ENCODE measurements at regions of chr12 and their contacts with region 1.

Region 1: GRCh38 chr12:87344699-87345098 is 684.5 kb downstream of the C12orf50 start:
- ATAC-seq: no peak
- H3K4me3 ChIP-seq: no peak overlapping the region
- H3K27ac ChIP-seq: no peak overlapping the region
- H3K4me1 ChIP-seq: no peaks in the 10 kb centered on the region

Region 2: DNA sequence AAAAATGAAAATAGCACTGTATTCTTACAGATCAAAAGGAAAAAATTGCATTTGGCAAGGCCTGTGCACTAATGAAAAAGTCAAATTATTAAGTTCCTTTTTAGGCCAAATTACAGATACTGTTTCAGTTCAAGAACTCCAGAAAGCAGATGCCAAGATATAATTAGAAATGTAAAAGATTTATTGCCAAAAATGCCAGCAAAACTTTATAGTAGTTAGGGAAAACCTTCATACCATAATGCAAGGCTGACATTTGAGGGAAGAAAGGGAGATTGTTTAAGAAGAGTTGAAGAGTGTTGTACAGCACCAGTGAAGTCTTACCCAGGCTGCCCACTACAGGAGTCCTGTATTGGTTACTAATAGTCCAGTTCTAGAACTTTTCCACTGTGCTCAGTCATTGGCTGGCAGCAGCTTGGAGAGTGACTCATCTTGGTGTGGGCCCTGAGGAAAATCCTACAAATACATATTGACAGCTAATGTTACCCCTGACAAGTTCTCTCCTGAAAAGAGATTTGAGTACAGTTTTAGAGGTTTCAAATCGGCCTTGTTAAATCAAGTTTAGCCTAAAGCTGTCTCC is 84.1 kb after region 1 on chr12:
- in situ Hi-C with region 1: no loop called
- ATAC-seq: peak in 2 of 8 experiments; percentile 67 to 93
- H3K4me3 ChIP-seq: no peak overlapping the region
- H3K27ac ChIP-seq: no peak overlapping the region
- H3K4me1 ChIP-seq: no peaks in the 10 kb centered on the region

Region 3: GRCh38 chr12:87518502-87518901 is 173.8 kb after region 1 on chr12:
- in situ Hi-C with region 1: no loop called
- ATAC-seq: no peak
- H3K4me3 ChIP-seq: no peak overlapping the region
- H3K27ac ChIP-seq: no peak overlapping the region
- H3K4me1 ChIP-seq: no peaks in the 10 kb centered on the region

Region 4: GRCh38 chr12:87667378-87667777 is 322.7 kb after region 1 on chr12:
- in situ Hi-C with region 1: loop called in 1 of 9 experiments (anchors 25 kb)
- ATAC-seq: peak in 6 of 8 experiments; percentile 23 to 72 (median 49)
- H3K4me3 ChIP-seq: no peak overlapping the region
- H3K27ac ChIP-seq: no peak overlapping the region
- H3K4me1 ChIP-seq: peaks cover 0 to 2% of the 10 kb centered on the region in 2 donors